ENCODE measurements at regions of chr1 and their contacts with region 1.

Region 1: GRCh38 chr1:155084722-155085503 is 6.3 kb downstream of the EFNA3 start:
- DNase-seq: peak; percentile 96 to 97
- ATAC-seq: peak; percentile 94
- H3K4me3 ChIP-seq: peak overlapping the region; percentile 27 to 59
- H3K27ac ChIP-seq: peak overlapping the region in 1 of 2 donors; percentile 55
- H3K4me1 ChIP-seq: no peaks in the 10 kb centered on the region
- H3K27me3 ChIP-seq: no peaks in the 10 kb centered on the region

Region 2: GRCh38 chr1:155044812-155045690 is 39.9 kb before region 1 on chr1:
- intact Hi-C with region 1: loop called (anchors 2 to 5 kb)
- DNase-seq: peak; percentile 88 to 89
- ATAC-seq: peak; percentile 90
- H3K4me3 ChIP-seq: no peak overlapping the region
- H3K27ac ChIP-seq: no peak overlapping the region
- H3K4me1 ChIP-seq: no peaks in the 10 kb centered on the region
- H3K27me3 ChIP-seq: no peaks in the 10 kb centered on the region

Region 3: DNA sequence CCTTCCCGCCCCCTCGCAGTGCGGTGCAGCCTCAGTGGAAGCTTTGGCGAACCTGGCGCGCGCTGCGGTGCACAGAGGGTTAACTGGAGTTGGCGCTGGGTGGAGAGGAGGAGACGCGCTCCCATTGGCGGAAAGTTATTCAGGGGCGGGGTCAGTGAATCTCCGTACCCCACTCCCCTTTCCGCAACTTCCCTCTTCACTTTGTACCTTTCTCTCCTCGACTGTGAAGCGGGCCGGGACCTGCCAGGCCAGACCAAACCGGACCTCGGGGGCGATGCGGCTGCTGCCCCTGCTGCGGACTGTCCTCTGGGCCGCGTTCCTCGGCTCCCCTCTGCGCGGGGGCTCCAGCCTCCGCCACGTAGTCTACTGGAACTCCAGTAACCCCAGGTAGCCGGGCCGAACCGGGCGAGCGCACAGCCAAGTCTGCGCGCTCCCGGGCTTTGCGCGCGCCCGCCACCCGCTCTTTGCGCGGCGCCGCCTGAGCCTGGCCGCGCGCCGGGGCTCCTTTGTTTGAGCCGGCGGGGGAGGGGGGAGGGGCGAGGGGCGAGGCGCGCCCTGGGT is 21.3 kb before region 1 on chr1 and contains the start of gene EFNA4:
- intact Hi-C with region 1: loop called in 1 of 2 experiments (anchors 1 kb)
- DNase-seq: peak; percentile 92 to 94
- ATAC-seq: peak; percentile 90
- H3K4me3 ChIP-seq: peak within 1 kb of the TSS; percentile 40 to 54
- H3K27ac ChIP-seq: no peak within 1 kb of the TSS
- H3K4me1 ChIP-seq: no peaks in the 10 kb centered on the region
- H3K27me3 ChIP-seq: no peaks in the 10 kb centered on the region
- total RNA-seq, gene EFNA4: 3.0 to 5.7 TPM